ENCODE measurements at regions of chr7 and their contacts with region 1.

Region 1: DNA sequence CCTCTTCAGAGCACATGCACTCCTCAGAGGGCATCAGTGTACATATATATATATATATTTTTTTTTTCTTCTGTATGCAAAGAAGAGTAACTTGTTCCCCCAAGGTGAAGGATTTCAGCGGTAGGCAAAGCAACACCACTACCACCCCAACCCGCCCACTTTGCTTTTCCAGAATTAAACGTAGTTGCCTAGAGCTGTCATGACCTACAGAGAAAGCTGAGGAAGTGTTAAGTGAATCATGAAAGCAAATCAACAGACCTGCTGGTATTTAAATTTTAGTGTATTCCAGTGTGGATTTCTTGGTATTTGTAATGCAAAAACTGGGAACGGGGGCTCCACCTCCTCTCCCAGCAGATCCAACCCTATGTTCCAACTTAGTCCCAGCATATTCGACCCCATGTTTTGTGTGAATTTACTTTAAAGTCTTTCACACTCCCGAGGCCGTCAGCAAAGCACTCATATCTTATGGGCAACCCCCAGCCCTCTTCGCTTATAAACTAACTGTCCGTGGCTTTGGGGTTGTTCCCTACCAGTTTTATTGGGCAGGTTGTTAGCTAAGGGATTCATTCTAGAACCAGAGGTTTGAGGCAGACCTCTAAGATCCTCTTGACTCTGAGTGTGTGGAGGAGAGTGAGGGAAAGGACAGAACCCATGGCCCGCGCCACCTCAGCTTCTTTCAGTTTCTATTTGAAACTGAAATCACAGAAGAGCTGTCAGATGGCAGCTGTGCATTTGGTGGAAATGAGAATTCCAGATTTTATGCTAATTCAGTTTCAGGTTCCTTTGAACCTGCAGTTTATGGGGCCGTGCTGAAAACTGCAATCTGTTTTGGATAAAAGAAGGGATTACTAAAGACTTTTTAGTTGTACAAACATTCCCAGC is 450.2 kb upstream of the GALNT17 start:
- DNase-seq: peak in 2 of 9 experiments; percentile 47 to 64
- ATAC-seq: peak; percentile 33
- H3K4me3 ChIP-seq: peak overlapping the region; percentile 20 to 44
- H3K4me3 Mint-ChIP-seq: peak overlapping the region; percentile 77
- H3K27ac ChIP-seq: peak overlapping the region in 1 of 2 experiments; percentile 74
- H3K27ac Mint-ChIP-seq: peak overlapping the region; percentile 75
- H3K4me1 ChIP-seq: peaks cover 16% of the 10 kb centered on the region
- H3K4me1 Mint-ChIP-seq: peaks cover 37% of the 10 kb centered on the region
- H3K27me3 ChIP-seq: no peaks in the 10 kb centered on the region
- H3K27me3 Mint-ChIP-seq: no peaks in the 10 kb centered on the region
- CTCF ChIP-seq: no peak

Region 2: DNA sequence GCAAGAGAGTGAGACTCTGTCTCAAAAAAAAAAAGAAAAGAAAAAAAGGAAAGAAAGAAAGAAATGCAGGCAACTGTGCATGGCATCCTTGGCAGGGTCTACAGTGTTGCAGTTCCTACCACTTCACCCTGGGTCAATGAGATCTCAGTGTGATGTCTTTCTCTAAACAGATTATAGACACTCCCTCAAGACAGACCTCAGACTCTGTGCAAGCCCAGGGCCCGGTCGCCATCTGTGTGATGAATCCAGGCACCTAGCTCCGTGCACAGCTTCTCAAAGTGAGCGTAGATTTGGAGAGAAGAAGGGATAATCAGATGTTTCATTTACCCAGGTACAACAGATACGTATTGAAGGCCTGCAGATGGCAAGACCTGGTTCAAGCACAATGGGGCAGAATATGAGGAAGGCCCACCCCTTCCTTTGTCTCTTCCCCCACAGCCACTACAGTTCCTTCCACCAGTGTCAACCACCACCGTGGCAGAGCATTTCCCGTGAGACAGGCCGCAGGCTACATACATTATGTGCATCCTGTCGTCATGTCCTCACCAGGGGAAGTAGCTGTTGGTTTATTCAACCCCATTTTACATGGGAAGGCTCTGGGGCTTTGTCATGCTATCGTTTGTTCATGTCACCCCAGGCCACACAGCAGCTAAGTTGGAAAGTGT is 21.4 kb before region 1 on chr7:
- CTCF ChIA-PET with region 1: interaction called, 3 read pairs
- POLR2A ChIA-PET with region 1: no interaction called
- intact Hi-C with region 1: loop called in 1 of 2 experiments (anchors 2 kb)
- DNase-seq: peak; percentile 24 to 92 (median 57)
- ATAC-seq: peak; percentile 87
- H3K4me3 ChIP-seq: no peak overlapping the region
- H3K4me3 Mint-ChIP-seq: no peak overlapping the region
- H3K27ac ChIP-seq: peak overlapping the region in 1 of 2 experiments; percentile 71
- H3K27ac Mint-ChIP-seq: peak overlapping the region; percentile 68
- H3K4me1 ChIP-seq: peaks cover 33% of the 10 kb centered on the region
- H3K4me1 Mint-ChIP-seq: peaks cover 39% of the 10 kb centered on the region
- H3K27me3 ChIP-seq: no peaks in the 10 kb centered on the region
- H3K27me3 Mint-ChIP-seq: no peaks in the 10 kb centered on the region
- CTCF ChIP-seq: no peak